ENCODE measurements at regions of chr14 and their contacts with region 1.

Region 1: GRCh38 chr14:94485944-94486841 is 10.2 kb upstream of the SERPINA9 start:
- DNase-seq: peak; percentile 83
- ATAC-seq: peak; percentile 96
- H3K4me3 Mint-ChIP-seq: peak overlapping the region; percentile 58
- H3K27ac Mint-ChIP-seq: peak overlapping the region; percentile 20
- H3K4me1 Mint-ChIP-seq: peaks cover 19% of the 10 kb centered on the region
- H3K27me3 Mint-ChIP-seq: no peaks in the 10 kb centered on the region
- CTCF ChIP-seq: peak; percentile 99

Region 2: DNA sequence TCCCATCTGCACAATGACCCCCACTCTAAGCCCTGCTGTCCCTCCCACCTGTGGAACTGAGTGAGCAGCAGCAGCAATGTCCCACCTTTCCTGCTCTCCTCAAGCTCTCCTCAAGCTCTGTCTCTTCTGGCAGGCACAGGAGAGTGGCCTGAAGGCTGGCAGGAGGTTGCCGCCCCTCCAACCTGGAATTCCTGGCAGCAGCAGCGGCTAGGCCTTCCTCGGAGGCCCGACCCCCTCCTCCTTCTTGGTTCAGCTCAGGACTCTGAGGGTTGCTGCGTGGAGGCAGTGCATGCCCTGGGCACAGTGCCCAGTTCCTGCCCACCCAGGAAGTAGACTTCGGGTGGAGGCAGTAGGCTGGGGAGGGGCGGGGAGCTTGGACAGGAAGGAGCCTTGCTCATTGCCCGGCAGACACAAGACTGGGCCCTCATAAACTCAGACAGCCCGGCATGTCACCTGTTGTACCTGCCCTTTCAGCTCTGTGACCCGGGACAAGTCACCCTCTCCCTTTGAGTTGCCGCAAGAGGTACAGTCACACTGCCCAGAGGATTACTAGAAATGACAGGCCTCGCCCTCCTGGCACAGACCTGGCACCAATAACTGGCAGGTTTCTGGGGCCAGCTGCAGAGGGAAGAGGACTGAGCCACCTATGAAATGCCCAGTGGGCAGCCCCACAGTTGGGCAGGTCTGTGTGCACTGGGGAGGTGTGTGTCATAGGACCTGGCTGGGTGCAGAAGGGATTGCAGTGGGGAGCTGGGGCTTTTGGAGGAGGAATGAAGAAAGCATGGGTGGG is 95.6 kb before region 1 on chr14:
- CTCF ChIA-PET with region 1: interaction called, 12 read pairs
- POLR2A ChIA-PET with region 1: no interaction called
- DNase-seq: no peak
- ATAC-seq: peak; percentile 50
- H3K4me3 Mint-ChIP-seq: no peak overlapping the region
- H3K27ac Mint-ChIP-seq: no peak overlapping the region
- H3K4me1 Mint-ChIP-seq: peaks cover 18% of the 10 kb centered on the region
- H3K27me3 Mint-ChIP-seq: no peaks in the 10 kb centered on the region; the same call in 1 of the 2 replicates
- CTCF ChIP-seq: no peak

Region 3: DNA sequence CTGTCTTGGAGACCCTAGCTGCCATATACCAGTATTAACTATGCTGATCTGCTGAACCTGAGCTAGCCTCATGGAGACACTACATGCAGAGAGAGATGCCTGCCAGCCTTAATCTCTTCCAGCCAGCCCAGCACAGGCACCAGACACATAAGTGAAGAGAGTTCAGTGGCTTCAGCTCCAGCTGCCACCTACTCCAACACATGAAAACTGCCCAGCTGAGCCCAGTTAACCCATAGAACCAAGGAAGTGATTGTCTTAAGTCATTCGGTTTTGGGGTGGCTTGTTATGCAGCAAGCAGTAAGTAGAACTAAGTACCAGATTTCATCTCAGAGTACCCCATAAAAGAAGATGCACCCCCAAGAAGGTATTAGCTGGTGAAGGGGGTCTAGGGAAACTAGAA is 41.2 kb before region 1 on chr14:
- CTCF ChIA-PET with region 1: interaction called, 33 read pairs
- POLR2A ChIA-PET with region 1: no interaction called
- DNase-seq: no peak
- ATAC-seq: no peak
- H3K4me3 Mint-ChIP-seq: no peak overlapping the region
- H3K27ac Mint-ChIP-seq: no peak overlapping the region
- H3K4me1 Mint-ChIP-seq: peaks cover 7% of the 10 kb centered on the region
- H3K27me3 Mint-ChIP-seq: peaks cover 7% of the 10 kb centered on the region
- CTCF ChIP-seq: no peak

Region 4: GRCh38 chr14:94501588-94502516 is 15.7 kb after region 1 on chr14:
- CTCF ChIA-PET with region 1: interaction called, 40 read pairs
- POLR2A ChIA-PET with region 1: no interaction called
- DNase-seq: no peak
- ATAC-seq: no peak
- H3K4me3 Mint-ChIP-seq: no peak overlapping the region
- H3K27ac Mint-ChIP-seq: no peak overlapping the region
- H3K4me1 Mint-ChIP-seq: no peaks in the 10 kb centered on the region
- H3K27me3 Mint-ChIP-seq: peaks cover 4% of the 10 kb centered on the region
- CTCF ChIP-seq: no peak

Region 5: GRCh38 chr14:94536823-94537222 is 50.6 kb after region 1 on chr14:
- CTCF ChIA-PET with region 1: interaction called, 34 read pairs
- POLR2A ChIA-PET with region 1: no interaction called
- DNase-seq: no peak
- ATAC-seq: peak; percentile 83
- H3K4me3 Mint-ChIP-seq: no peak overlapping the region
- H3K27ac Mint-ChIP-seq: no peak overlapping the region
- H3K4me1 Mint-ChIP-seq: peaks cover 12% of the 10 kb centered on the region
- H3K27me3 Mint-ChIP-seq: no peaks in the 10 kb centered on the region; the same call in 1 of the 2 replicates
- CTCF ChIP-seq: no peak

Region 6: DNA sequence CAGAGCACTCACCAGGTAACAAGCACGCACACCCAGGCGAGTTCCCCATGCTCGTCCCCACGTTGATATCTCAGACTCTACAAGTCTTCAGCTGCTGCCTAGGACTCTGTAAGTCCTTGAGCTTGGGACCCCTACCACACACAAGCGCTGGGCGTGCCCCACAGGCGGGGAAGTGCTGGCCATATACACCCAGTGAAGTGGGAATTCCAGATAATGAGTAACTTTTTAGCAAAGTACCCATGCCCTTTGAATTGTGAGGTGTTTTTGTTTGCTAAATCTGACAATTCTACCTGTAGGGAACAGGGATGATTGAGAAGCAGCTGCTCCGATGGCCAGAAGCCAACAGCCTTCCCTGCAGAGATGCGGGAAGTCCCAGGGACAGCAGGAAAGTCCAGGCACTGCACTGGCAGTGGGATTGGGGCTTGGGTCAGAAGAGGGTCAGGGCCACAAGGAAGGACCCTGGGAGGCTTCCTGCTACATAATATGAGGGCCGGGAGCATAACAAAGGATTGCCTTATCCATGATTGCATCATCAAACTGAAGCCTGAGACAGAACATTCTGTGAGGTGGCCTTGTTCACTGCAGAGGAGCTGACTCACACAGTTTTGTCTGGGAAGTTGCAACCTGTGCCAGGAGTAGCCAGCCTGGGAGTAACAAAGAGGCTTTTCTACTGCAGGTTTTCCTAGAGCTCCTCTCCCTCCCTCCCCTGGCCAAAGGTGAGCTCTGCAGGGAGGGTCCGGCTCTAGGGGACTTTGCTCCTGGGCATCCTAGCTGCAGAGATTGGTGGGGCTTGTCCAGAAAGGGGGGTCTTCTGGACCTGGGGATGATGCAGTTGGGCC is 112.8 kb after region 1 on chr14:
- CTCF ChIA-PET with region 1: interaction called, 14 read pairs
- POLR2A ChIA-PET with region 1: no interaction called
- DNase-seq: no peak
- ATAC-seq: peak; percentile 59
- H3K4me3 Mint-ChIP-seq: no peak overlapping the region
- H3K27ac Mint-ChIP-seq: 0 out of 2 replicates have a peak overlapping the region, but pooled peaks have one; percentile 6
- H3K4me1 Mint-ChIP-seq: peaks cover 18% of the 10 kb centered on the region
- H3K27me3 Mint-ChIP-seq: no peaks in the 10 kb centered on the region; the same call in none of the 2 replicates
- CTCF ChIP-seq: no peak

Measured in WTC11 (cell line).